ENCODE measurements at regions of chr3 and their contacts with region 1.

Region 1: GRCh38 chr3:107064445-107065060 is 312.7 kb upstream of the CCDC54 start:
- DNase-seq: peak; percentile 78
- ATAC-seq: peak; percentile 91
- H3K4me3 ChIP-seq: no peak overlapping the region
- H3K27ac ChIP-seq: no peak overlapping the region
- H3K4me1 ChIP-seq: no peaks in the 10 kb centered on the region; the same call in 1 of the 2 replicates
- H3K27me3 ChIP-seq: no peaks in the 10 kb centered on the region
- CTCF ChIP-seq: peak; percentile 82
- POLR2A ChIP-seq: no peak
- RAD21 ChIP-seq: peak; percentile 92

Region 2: GRCh38 chr3:105686278-105686897 is 1378.2 kb before region 1 on chr3:
- CTCF ChIA-PET with region 1: interaction called, 5 read pairs
- POLR2A ChIA-PET with region 1: no interaction called
- dilution Hi-C with region 1: no loop called
- in situ Hi-C with region 1: loop called (anchors 10 kb)
- intact Hi-C with region 1: loop called (anchors 2 kb)
- DNase-seq: peak; percentile 54
- ATAC-seq: peak; percentile 60; the same call in 1 of the 2 replicates
- H3K4me3 ChIP-seq: no peak overlapping the region
- H3K27ac ChIP-seq: no peak overlapping the region
- H3K4me1 ChIP-seq: peaks cover 2% of the 10 kb centered on the region; the same call in 1 of the 2 replicates
- H3K27me3 ChIP-seq: no peaks in the 10 kb centered on the region
- CTCF ChIP-seq: peak; percentile 83
- POLR2A ChIP-seq: no peak
- RAD21 ChIP-seq: peak; percentile 87

Region 3: DNA sequence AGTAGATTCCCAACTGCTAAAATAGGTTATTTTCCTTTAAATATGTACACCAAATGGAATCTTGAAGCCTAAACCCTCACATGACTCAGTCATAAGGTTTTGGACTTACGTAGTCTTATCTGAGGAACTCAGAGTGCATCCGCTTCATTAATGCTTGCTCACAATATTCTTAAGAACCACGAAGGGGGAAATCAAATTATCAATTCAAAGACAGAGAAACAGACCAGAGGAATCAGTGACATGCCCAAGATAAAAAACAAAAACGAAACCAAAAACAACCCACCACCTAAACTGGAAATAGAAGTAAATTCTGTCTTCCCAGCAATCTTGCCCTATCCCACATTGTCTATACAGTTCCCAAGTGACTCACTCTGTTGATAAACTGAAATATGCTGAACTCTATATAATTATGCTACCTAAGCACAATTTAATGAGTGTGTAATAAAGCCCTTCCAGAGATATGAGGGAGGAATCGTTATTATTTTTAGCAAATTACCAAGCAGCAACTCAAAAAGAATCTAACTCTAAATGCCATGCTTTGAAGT is 1060.3 kb before region 1 on chr3:
- CTCF ChIA-PET with region 1: no interaction called
- POLR2A ChIA-PET with region 1: no interaction called
- dilution Hi-C with region 1: no loop called
- in situ Hi-C with region 1: no loop called
- intact Hi-C with region 1: loop called (anchors 10 kb)
- DNase-seq: peak; percentile 91
- ATAC-seq: peak; percentile 83
- H3K4me3 ChIP-seq: peak overlapping the region; percentile 75; the same call in 1 of the 2 replicates
- H3K27ac ChIP-seq: peak overlapping the region; percentile 29; the same call in 1 of the 2 replicates
- H3K4me1 ChIP-seq: peaks cover 4% of the 10 kb centered on the region
- H3K27me3 ChIP-seq: no peaks in the 10 kb centered on the region
- CTCF ChIP-seq: no peak
- POLR2A ChIP-seq: no peak
- RAD21 ChIP-seq: no peak

Region 4: DNA sequence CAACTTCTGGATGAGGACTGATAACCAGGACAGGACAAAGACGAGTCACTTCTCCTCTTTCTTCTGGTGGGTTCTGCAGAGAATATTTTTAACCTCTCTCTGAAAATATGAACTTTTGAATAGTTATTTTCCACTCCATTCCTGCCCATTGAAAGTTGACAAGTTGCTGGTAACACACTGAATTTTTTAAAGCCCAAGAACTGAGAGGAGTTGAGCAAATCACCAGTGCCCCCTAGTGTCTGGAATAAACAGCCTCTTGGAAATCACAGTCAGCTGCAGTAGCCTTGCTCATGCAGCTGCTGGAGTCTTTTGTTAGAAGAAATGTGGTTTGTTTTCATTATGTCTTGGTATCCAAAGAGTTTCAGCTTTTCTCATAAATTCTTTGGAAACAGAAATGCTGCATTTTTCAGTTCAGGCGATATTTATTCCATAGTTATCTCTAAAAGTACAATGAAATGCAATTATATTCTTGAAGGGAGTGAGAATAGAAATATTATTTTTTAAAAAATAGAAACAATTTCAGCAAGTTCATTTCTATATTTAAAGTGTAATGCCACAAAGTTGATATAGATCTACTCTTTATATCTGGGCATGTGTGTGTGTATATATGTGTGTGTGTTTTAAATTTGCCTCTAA is 454.8 kb before region 1 on chr3:
- CTCF ChIA-PET with region 1: no interaction called
- POLR2A ChIA-PET with region 1: no interaction called
- dilution Hi-C with region 1: no loop called
- in situ Hi-C with region 1: no loop called
- intact Hi-C with region 1: loop called (anchors 1 kb)
- DNase-seq: peak; percentile 93
- ATAC-seq: peak; percentile 90
- H3K4me3 ChIP-seq: no peak overlapping the region
- H3K27ac ChIP-seq: no peak overlapping the region
- H3K4me1 ChIP-seq: peaks cover 4% of the 10 kb centered on the region
- H3K27me3 ChIP-seq: no peaks in the 10 kb centered on the region
- CTCF ChIP-seq: peak; percentile 98
- POLR2A ChIP-seq: 0 out of 2 replicates have a peak, but pooled peaks have one; percentile 33
- RAD21 ChIP-seq: peak; percentile 97

Region 5: GRCh38 chr3:106731230-106731629 is 333.3 kb before region 1 on chr3:
- CTCF ChIA-PET with region 1: no interaction called
- POLR2A ChIA-PET with region 1: no interaction called
- dilution Hi-C with region 1: no loop called
- in situ Hi-C with region 1: no loop called
- intact Hi-C with region 1: loop called (anchors 10 kb)
- DNase-seq: no peak
- ATAC-seq: no peak
- H3K4me3 ChIP-seq: no peak overlapping the region
- H3K27ac ChIP-seq: no peak overlapping the region
- H3K4me1 ChIP-seq: peaks cover 5% of the 10 kb centered on the region; the same call in 1 of the 2 replicates
- H3K27me3 ChIP-seq: no peaks in the 10 kb centered on the region
- CTCF ChIP-seq: no peak
- POLR2A ChIP-seq: no peak
- RAD21 ChIP-seq: no peak

Region 6: GRCh38 chr3:106862067-106862466 is 202.5 kb before region 1 on chr3:
- CTCF ChIA-PET with region 1: interaction called, 5 read pairs
- POLR2A ChIA-PET with region 1: no interaction called
- dilution Hi-C with region 1: no loop called
- in situ Hi-C with region 1: no loop called
- intact Hi-C with region 1: loop called (anchors 5 kb)
- DNase-seq: peak; percentile 70
- ATAC-seq: peak; percentile 91
- H3K4me3 ChIP-seq: no peak overlapping the region
- H3K27ac ChIP-seq: no peak overlapping the region
- H3K4me1 ChIP-seq: 0 out of 2 replicates have a peak, but pooled peaks cover 1% of the 10 kb centered on the region
- H3K27me3 ChIP-seq: no peaks in the 10 kb centered on the region
- CTCF ChIP-seq: peak; percentile 55
- POLR2A ChIP-seq: no peak
- RAD21 ChIP-seq: peak; percentile 69

Measured in IMR-90 (cell line).